Calu3 (cell line): ENCODE measurements at regions of chr19 and their contacts with region 1.

Region 1: DNA sequence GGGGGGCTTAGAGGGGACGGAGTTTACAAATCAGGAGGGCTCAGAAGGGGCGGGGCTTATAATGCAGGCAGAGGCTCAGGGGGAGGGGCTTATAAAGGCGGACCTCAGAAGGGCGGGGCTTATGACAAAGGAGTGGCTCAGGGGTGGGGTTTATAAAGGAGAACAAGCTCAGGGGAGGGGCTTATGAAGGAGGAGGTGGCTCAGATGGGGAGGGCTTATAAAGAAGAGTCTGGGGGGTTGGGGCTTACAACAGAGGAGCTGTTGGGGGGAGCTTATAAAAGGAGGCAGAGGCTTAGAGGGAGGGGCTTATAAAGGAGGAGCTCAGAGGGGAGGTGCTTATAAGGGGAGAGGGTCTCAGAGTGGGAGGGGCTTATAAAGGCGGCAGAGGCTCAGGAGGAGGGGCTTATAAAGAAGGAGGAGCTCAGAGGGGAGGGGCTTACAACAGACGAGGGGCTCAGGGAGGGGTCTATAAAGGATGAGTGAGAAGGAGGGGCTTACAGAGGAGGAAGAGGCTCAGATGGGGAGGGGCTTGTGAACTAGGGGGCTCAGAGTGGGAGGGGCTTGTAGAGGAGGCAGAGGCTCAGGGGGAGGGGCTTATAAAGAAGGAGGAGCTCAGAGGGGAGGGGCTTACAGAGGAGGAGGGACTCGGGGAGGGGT is 1.0 kb downstream of the SMIM24 start:
- DNase-seq: no peak
- H3K4me3 Mint-ChIP-seq: no peak overlapping the region
- H3K27ac Mint-ChIP-seq: no peak overlapping the region
- H3K4me1 Mint-ChIP-seq: no peaks in the 10 kb centered on the region
- H3K27me3 Mint-ChIP-seq: no peaks in the 10 kb centered on the region
- CTCF ChIP-seq: no peak

Region 2: GRCh38 chr19:3304871-3305423 is 174.4 kb before region 1 on chr19:
- CTCF ChIA-PET with region 1: interaction called, 10 read pairs
- intact Hi-C with region 1: no loop called
- DNase-seq: peak; percentile 74
- H3K4me3 Mint-ChIP-seq: no peak overlapping the region
- H3K27ac Mint-ChIP-seq: no peak overlapping the region
- H3K4me1 Mint-ChIP-seq: no peaks in the 10 kb centered on the region
- H3K27me3 Mint-ChIP-seq: peaks cover 28% of the 10 kb centered on the region
- CTCF ChIP-seq: peak; percentile 67